Activated T-helper 2 cell treated with anti-CD3 and anti-CD28 coated beads, Interferon-gamma antibody, Interleukin-2, Interleukin-4, amounts not matched to agents 10 μg/mL and 5 μg/mL and 100 μg/mL, durations not matched to agents 14 hours and 24 hours and 36 hours (primary cell): ENCODE measurements at regions of chr5 and their contacts with region 1.

Region 1: DNA sequence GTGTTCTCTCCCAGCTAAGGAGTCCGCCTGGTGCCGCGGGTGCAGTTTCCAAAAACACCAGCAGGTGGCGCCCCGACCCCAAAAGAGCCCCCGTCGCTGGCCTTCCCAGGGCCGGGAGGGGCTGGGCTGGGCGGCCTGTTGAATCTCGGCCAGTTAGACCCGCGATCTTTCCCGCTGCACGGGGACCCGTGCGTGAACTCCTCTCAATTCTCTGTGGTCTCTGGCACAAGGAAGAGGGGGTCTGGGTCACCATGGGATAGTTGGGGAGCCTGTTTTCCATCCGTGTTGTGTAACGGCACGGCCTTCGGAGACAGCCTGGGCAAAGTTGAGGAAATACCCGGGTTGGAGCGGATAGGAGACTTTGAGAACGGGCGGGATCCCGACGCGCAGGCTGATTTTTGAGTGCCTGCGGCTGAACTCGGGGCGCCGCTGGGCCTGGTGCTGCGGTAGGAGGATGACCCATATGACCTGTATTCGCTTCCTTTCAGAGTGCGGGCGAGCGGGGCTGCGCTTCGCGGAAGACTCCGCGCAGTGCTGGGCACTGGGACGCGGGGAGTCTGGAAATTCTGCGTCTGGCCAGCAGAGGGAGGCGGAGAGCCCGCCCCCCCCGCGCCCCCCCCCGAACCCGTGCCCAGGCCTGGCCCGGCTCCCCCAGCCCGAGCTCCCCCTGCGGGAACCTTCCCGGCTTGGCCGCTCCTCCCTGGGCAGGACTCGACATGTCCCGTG is 7.9 kb upstream of the PSD2 start:
- DNase-seq: peak; percentile 74
- H3K4me3 Mint-ChIP-seq: peak overlapping the region; percentile 75
- H3K27ac Mint-ChIP-seq: no peak overlapping the region
- H3K4me1 Mint-ChIP-seq: no peaks in the 10 kb centered on the region
- H3K27me3 Mint-ChIP-seq: peaks cover 32% of the 10 kb centered on the region

Region 2: GRCh38 chr5:139560752-139561654 is 226.7 kb before region 1 on chr5 and contains the start of gene UBE2D2:
- intact Hi-C with region 1: no loop called
- DNase-seq: peak; percentile 96
- H3K4me3 Mint-ChIP-seq: peak within 1 kb of the TSS; percentile 93
- H3K27ac Mint-ChIP-seq: peak within 1 kb of the TSS; percentile 98
- H3K4me1 Mint-ChIP-seq: peaks cover 32% of the 10 kb centered on the region
- H3K27me3 Mint-ChIP-seq: no peaks in the 10 kb centered on the region
- total RNA-seq, gene UBE2D2: 249 and 262 TPM in 2 replicates

Region 3: GRCh38 chr5:139774980-139775661 is 12.6 kb before region 1 on chr5:
- intact Hi-C with region 1: no loop called
- DNase-seq: peak; percentile 69
- H3K4me3 Mint-ChIP-seq: no peak overlapping the region
- H3K27ac Mint-ChIP-seq: no peak overlapping the region
- H3K4me1 Mint-ChIP-seq: peaks cover 5% of the 10 kb centered on the region
- H3K27me3 Mint-ChIP-seq: peaks cover 25% of the 10 kb centered on the region

Region 4: GRCh38 chr5:139822553-139823425 is 35.1 kb after region 1 on chr5:
- intact Hi-C with region 1: no loop called
- DNase-seq: no peak
- H3K4me3 Mint-ChIP-seq: no peak overlapping the region
- H3K27ac Mint-ChIP-seq: no peak overlapping the region
- H3K4me1 Mint-ChIP-seq: no peaks in the 10 kb centered on the region
- H3K27me3 Mint-ChIP-seq: peaks cover 3% of the 10 kb centered on the region

Region 5: GRCh38 chr5:139844472-139845145 is 56.9 kb after region 1 on chr5:
- intact Hi-C with region 1: loop called (anchors 1 kb)
- DNase-seq: peak; percentile 28
- H3K4me3 Mint-ChIP-seq: no peak overlapping the region
- H3K27ac Mint-ChIP-seq: no peak overlapping the region
- H3K4me1 Mint-ChIP-seq: peaks cover 6% of the 10 kb centered on the region
- H3K27me3 Mint-ChIP-seq: peaks cover 55% of the 10 kb centered on the region

Region 6: GRCh38 chr5:139863855-139864558 is 76.3 kb after region 1 on chr5:
- intact Hi-C with region 1: loop called (anchors 1 kb)
- DNase-seq: peak; percentile 12
- H3K4me3 Mint-ChIP-seq: no peak overlapping the region
- H3K27ac Mint-ChIP-seq: no peak overlapping the region
- H3K4me1 Mint-ChIP-seq: no peaks in the 10 kb centered on the region
- H3K27me3 Mint-ChIP-seq: peaks cover 11% of the 10 kb centered on the region

Region 7: DNA sequence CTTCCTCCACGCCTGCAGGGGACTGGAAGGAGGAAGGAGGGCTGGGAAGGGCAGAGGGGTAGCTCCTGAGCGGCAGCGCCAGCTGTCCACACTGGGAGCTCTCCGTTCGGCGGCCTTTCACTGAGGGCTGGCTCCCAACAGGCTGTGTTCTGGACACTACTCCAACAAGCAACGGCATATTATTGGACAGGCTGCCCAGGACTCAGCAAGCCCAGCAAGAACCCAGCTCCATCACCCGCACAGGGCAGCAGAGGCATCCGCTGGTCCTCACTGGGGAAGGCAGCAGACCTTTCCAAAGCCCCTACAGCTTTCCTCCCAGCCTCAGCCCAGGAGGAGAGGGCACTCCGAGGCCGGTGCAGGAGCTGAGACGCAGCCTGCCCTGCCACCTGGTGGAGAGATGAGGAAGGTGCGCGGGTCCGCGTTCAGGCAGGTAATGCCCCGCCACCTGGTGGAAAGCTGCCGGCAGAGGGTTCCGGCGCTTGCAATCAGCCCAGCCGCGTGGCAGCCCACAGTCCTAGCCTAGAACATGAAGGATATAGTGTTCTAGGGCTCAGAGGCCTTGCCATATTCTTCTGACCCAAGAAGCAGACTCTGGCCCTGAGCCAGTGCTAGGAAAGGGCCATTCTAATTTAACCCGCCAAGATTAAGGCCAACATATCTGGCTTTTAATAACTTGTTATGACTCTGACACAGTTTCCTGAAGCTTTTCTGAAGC is 181.0 kb after region 1 on chr5:
- intact Hi-C with region 1: loop called (anchors 1 kb)
- DNase-seq: peak; percentile 80
- H3K4me3 Mint-ChIP-seq: no peak overlapping the region
- H3K27ac Mint-ChIP-seq: no peak overlapping the region
- H3K4me1 Mint-ChIP-seq: no peaks in the 10 kb centered on the region
- H3K27me3 Mint-ChIP-seq: peaks cover 19% of the 10 kb centered on the region

Region 8: DNA sequence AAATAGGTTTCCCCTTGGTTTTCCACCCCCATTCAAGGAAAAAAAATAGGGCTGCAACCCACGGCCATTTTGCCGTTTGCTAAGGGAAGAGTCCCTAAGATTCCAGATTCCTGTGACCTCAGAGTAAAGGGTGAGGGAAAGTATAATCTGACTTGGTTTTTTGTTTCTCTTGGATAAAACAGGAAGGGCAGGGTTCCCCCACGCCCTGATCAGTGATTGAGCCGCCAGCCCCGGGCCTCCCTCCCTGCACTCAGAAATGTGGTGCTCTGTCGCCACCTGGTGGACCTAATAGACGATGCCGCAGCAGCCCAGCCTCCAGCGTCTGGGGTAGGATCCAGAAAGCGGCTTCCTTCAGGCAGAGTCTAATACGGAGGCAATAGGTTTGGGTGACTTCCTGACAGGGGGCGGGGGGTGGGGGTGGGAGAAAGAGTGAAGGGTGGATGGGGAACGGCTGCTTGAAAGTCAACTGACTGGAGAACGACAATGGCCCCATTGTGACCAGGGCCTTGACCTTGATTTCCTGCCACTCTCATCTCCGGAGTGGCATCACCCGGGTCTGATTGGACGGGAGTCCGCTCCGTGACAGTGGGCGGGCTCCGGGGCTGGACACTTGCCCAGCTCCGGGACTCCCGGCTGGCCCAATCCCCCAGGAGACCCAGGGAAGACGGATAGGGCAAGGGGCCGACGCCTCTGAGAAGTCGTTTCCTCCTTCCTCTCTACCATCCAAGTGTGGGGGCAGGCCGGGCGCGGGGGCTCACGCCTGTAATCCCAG is 369.5 kb after region 1 on chr5:
- intact Hi-C with region 1: loop called (anchors 2 kb)
- DNase-seq: peak; percentile 77
- H3K4me3 Mint-ChIP-seq: peak overlapping the region; percentile 33
- H3K27ac Mint-ChIP-seq: no peak overlapping the region
- H3K4me1 Mint-ChIP-seq: no peaks in the 10 kb centered on the region
- H3K27me3 Mint-ChIP-seq: peaks cover 4% of the 10 kb centered on the region